Caco-2 (cell line): ENCODE measurements at regions of chr1 and their contacts with region 1.

Region 1: DNA sequence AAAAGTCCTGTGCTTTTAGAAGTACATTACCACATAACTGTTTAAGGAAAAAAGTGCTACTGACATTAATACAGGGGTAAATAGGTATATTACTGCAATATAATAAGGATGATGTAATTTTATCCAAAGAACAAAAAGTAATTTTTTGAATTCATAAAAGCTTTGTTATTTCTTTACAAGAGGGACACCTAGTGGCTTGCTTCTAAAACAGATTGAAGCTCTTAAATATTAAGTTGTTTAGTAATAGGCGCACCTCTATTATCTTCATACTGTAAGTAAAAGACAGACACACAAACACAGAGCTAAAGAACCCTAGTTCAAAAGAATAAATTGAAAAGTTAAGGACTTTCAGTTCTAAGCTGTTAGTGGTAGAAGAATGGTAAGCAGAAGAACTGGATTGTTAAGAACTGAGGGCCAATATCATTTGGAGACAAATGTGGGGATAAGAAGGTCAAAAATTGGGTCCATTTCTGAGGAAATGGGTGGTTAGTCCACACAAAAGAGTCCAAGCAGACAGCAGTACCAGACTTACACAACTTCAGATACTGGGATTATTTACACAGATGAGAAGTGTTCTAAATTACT is 15.4 kb downstream of the ZNHIT6 start:
- DNase-seq: no peak
- H3K4me3 ChIP-seq: no peak overlapping the region
- H3K4me3 Mint-ChIP-seq: no peak overlapping the region
- H3K27ac Mint-ChIP-seq: no peak overlapping the region
- H3K4me1 ChIP-seq: no peaks in the 10 kb centered on the region
- H3K4me1 Mint-ChIP-seq: no peaks in the 10 kb centered on the region
- H3K27me3 ChIP-seq: no peaks in the 10 kb centered on the region
- H3K27me3 Mint-ChIP-seq: no peaks in the 10 kb centered on the region
- CTCF ChIP-seq: peak in 1 of 2 experiments; percentile 7

Region 2: GRCh38 chr1:85494904-85495266 is 197.9 kb before region 1 on chr1:
- CTCF ChIA-PET with region 1: no interaction called
- POLR2A ChIA-PET with region 1: no interaction called
- intact Hi-C with region 1: loop called (anchors 1 kb)
- DNase-seq: peak in 1 of 2 experiments; percentile 42
- H3K4me3 ChIP-seq: no peak overlapping the region
- H3K4me3 Mint-ChIP-seq: no peak overlapping the region
- H3K27ac Mint-ChIP-seq: no peak overlapping the region
- H3K4me1 ChIP-seq: no peaks in the 10 kb centered on the region; the same call in 1 of the 2 replicates
- H3K4me1 Mint-ChIP-seq: peaks cover 15% of the 10 kb centered on the region
- H3K27me3 ChIP-seq: no peaks in the 10 kb centered on the region
- H3K27me3 Mint-ChIP-seq: no peaks in the 10 kb centered on the region
- CTCF ChIP-seq: peak in 1 of 2 experiments; percentile 53

Region 3: DNA sequence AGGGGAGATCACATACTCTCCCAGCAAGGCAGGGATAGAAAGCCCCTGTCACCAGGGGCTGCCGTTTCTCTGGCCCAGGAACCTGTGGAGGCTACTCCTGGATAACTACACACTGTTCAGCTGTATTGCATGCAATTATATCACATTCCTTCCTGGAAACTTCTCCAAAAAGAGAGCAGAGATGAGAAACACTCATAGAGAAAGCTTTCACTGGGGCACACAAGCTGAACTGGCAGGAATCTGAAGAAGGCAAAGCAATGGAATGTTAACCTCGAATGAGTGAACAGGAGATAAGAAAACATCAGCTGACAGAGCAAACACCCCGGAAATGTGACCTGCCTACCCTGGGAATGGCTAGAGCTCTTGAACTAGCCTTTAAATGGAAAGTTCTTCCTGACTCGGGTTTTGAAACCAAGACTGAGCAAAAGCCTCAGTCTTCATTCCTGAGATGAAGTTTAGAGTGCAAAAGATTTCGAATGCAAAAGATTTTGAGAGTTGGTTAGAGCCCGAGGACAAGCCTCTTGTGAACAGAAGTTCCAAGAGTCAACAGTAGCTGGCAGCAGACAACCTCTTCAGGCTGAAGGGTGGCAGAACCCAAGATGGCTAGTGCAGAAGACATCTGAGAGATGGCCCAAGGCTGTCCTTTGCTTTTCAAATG is 80.0 kb before region 1 on chr1:
- CTCF ChIA-PET with region 1: interaction called, 9 read pairs
- POLR2A ChIA-PET with region 1: no interaction called
- intact Hi-C with region 1: loop called (anchors 2 kb)
- DNase-seq: peak; percentile 60 to 69
- H3K4me3 ChIP-seq: no peak overlapping the region
- H3K4me3 Mint-ChIP-seq: peak overlapping the region; percentile 70
- H3K27ac Mint-ChIP-seq: peak overlapping the region; percentile 96
- H3K4me1 ChIP-seq: peaks cover 47% of the 10 kb centered on the region
- H3K4me1 Mint-ChIP-seq: peaks cover 47% of the 10 kb centered on the region
- H3K27me3 ChIP-seq: no peaks in the 10 kb centered on the region
- H3K27me3 Mint-ChIP-seq: no peaks in the 10 kb centered on the region
- CTCF ChIP-seq: peak; percentile 35 to 41